CD14-positive monocyte (primary cell): ENCODE measurements at regions of chr10 and their contacts with region 1.

Region 1: DNA sequence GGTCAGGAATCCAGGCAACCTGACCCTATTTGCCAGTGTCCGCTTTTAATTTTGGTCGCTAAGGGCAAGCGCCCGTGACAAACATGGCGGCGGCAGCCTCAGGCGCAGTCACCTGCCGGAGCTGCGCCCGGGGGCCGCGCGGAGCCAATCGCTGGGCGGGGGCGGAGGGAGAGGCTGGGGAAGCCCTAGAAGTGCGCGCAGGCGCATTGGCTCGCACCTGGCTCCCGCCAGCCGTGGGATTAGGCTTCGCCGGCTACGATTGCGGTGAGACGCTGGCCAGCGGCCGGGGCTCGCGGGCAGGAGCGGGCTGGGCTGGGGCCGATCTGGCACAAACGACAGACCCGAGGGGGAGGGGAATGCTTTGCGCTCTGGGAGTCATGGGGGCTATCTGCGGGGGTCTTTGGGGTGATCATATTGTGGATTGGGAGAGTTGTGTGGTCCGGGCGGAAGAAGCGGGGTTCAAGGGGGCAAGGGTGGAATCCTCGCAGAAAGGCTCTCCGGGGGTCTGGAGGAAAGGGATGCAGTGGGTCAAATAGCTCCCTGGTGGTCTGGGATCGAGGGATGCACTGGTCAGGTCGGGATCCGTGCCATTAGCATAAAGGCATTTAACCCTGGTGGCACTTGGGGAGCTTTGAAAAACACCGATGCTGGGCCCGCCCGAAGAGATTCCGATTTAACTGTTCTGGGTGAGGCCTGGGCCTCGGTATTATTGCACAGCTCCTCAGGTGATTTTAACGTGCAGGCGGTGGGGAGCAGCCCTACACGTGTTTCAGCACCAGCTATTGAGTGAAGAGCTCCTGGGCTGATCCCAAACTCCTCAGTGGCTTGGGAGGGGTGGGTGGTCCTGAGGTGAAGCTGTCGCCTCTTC is 10.1 kb upstream of the C10orf95 start:
- DNase-seq: peak; percentile 80 to 94 (median 90)
- H3K4me3 ChIP-seq: peak overlapping the region; percentile 32 to 76 (median 59)
- H3K4me3 Mint-ChIP-seq: peak overlapping the region; percentile 89 to 95
- H3K27ac ChIP-seq: peak overlapping the region; percentile 11 to 69
- H3K27ac Mint-ChIP-seq: peak overlapping the region; percentile 66 to 94 (median 86)
- H3K4me1 ChIP-seq: peaks cover 28 to 35% of the 10 kb centered on the region in 2 donors
- H3K4me1 Mint-ChIP-seq: peaks cover 38% of the 10 kb centered on the region
- H3K27me3 ChIP-seq: peaks cover 0 to 3% of the 10 kb centered on the region in 2 donors
- H3K27me3 Mint-ChIP-seq: peaks cover 3 to 10% (median 10%) of the 10 kb centered on the region in 3 donors
- CTCF ChIP-seq: no peak

Region 2: GRCh38 chr10:102420810-102421644 is 40.4 kb before region 1 on chr10 and contains the start of gene FBXL15:
- intact Hi-C with region 1: loop called in 1 of 2 experiments (anchors 5 kb)
- DNase-seq: peak; percentile 93 to 97 (median 96)
- H3K4me3 ChIP-seq: peak within 1 kb of the TSS; percentile 68 to 96 (median 82)
- H3K4me3 Mint-ChIP-seq: peak within 1 kb of the TSS; percentile 93 to 97
- H3K27ac ChIP-seq: peak within 1 kb of the TSS; percentile 70 to 71
- H3K27ac Mint-ChIP-seq: peak within 1 kb of the TSS; percentile 89 to 98 (median 96)
- H3K4me1 ChIP-seq: peaks cover 33 to 41% of the 10 kb centered on the region in 2 donors
- H3K4me1 Mint-ChIP-seq: peaks cover 34% of the 10 kb centered on the region
- H3K27me3 ChIP-seq: peaks cover 11 to 22% of the 10 kb centered on the region in 2 donors
- H3K27me3 Mint-ChIP-seq: peaks cover 21 to 34% (median 24%) of the 10 kb centered on the region in 3 donors
- CTCF ChIP-seq: no peak
- polyA plus RNA-seq, gene FBXL15: 16.0 to 36.3 (median 25.5) TPM

Region 3: DNA sequence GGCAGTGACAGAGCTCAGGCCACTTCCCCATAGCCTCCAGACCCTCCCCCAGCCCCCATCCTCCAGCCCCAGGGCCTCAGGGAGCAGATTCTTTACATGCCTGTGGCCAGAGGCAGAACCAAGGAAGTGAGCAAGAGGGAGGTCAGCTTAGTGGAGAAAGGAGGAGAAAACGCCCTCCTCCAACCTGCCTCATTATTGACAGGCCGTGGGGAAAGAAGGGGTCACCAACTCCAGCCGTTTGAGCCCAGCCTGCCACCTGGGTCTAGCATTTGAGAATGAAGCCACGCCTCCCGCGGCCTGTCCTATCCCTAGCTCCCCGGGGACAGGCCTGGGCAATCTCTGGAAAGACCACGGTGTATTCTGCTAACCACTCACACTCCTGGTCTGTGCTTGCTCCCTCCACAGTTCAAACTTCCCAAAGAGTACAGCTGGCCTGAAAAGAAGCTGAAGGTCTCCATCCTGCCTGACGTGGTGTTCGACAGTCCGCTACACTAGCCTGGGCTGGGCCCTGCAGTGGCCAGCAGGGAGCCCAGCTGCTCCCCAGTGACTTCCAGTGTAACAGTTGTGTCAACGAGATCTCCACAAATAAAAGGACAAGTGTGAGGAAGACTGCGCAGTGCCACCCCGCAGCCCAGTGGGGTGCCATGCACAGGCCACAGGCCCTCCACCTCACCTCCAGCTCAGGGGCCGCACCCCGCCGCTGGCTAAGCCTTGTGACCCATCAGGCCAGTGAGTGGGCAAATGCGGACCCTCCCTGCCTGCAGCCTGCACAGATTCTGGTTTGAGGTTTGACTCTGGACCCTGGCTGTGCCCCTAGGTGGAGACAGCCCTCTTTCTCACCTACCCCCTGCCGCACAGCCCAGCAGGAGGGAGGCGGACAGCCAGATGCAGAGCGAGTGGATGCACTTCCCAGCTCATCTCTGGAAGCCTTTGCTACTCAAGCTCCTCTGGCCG is 168.5 kb after region 1 on chr10:
- intact Hi-C with region 1: no loop called
- DNase-seq: no peak
- H3K4me3 ChIP-seq: no peak overlapping the region
- H3K4me3 Mint-ChIP-seq: no peak overlapping the region
- H3K27ac ChIP-seq: no peak overlapping the region
- H3K27ac Mint-ChIP-seq: peak overlapping the region in 4 of 7 donors; percentile 5 to 79 (median 68)
- H3K4me1 ChIP-seq: peaks cover 61 to 62% of the 10 kb centered on the region in 2 donors
- H3K4me1 Mint-ChIP-seq: peaks cover 66% of the 10 kb centered on the region
- H3K27me3 ChIP-seq: no peaks in the 10 kb centered on the region
- H3K27me3 Mint-ChIP-seq: peaks cover 0 to under 1% (median 0%) of the 10 kb centered on the region in 3 donors
- CTCF ChIP-seq: no peak